Thyroid gland (tissue), 4 donors: ENCODE measurements at regions of chr2 and their contacts with region 1.

Region 1: DNA sequence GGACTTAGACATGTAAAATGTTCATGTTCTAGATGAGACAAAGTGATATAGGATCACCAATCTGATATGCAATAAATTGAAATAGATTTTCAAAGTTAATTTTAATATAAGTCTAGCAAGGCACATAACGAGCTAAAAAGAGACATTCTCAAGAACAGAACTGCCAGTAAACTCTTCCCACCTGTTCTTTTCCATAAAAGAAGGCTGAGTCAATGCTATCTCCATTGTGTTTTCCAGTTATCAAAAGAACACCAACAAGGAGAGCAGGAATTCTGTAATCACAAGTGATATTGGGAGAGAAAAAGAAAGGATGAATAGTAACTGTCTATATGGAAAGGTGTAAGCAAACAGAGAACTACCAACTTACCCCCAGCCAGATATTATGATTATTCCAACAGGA is 25.6 kb downstream of the GPR155 start:
- DNase-seq: no peak
- H3K4me3 ChIP-seq: no peak overlapping the region
- H3K27ac ChIP-seq: no peak overlapping the region
- H3K4me1 ChIP-seq: no peaks in the 10 kb centered on the region
- H3K27me3 ChIP-seq: no peaks in the 10 kb centered on the region
- CTCF ChIP-seq: no peak
- POLR2A ChIP-seq: no peak

Region 2: GRCh38 chr2:174697255-174697654 is 236.0 kb after region 1 on chr2:
- intact Hi-C with region 1: loop called (anchors 5 kb)
- DNase-seq: peak; percentile 48 to 49
- H3K4me3 ChIP-seq: no peak overlapping the region
- H3K27ac ChIP-seq: no peak overlapping the region
- H3K4me1 ChIP-seq: no peaks in the 10 kb centered on the region
- H3K27me3 ChIP-seq: no peaks in the 10 kb centered on the region
- CTCF ChIP-seq: peak in 5 of 6 experiments; percentile 45 to 85 (median 62)
- POLR2A ChIP-seq: no peak